ENCODE measurements at regions of chr4 and their contacts with region 1.

Region 1: GRCh38 chr4:177250056-177250696 is 59.5 kb upstream of the NEIL3 start:
- DNase-seq: peak in 1 of 2 donors; percentile 82
- H3K4me3 ChIP-seq: no peak overlapping the region
- H3K27ac ChIP-seq: no peak overlapping the region
- H3K4me1 ChIP-seq: peaks cover 0 to 4% of the 10 kb centered on the region in 2 donors
- H3K27me3 ChIP-seq: no peaks in the 10 kb centered on the region
- CTCF ChIP-seq: peak; percentile 77 to 96 (median 92)

Region 2: DNA sequence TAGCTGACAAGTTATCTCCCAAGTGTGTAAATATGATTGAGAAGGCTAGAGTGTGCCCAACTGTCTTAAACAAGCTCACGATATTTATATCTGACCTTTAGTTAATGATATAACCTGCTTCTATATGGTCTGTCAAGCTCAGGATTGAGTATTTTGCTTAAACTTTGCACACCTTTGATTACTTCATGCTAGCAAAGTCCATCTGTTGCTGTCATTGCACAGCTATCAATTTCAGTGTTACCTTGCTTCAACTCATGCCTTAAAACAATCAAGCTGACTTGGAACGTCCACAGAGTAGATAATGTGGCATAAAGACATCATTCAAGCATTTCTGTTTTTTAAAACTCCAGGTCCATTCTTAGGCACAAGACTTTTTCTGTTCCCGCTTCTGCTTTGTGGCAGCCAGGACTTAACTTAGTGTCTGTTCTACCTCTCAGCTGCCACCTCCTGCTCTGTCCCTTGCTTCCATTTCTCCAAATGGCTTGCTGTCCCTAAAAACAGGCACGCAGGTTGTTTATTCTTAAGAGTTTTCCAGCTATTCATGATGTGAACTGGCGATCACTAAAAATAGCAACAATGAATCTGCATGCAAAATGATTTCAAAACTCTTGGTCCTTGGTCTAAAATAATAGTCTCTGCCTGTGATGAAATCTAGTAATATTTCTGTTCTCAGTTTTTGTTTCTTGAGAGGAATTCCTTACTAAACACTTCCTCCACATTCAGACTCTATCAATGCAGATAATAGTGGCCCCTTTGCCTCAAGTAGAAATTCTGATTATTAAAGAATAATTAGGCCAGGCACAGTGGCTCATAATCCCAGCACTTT is 43.2 kb after region 1 on chr4:
- intact Hi-C with region 1: loop called (anchors 5 kb)
- DNase-seq: no peak
- H3K4me3 ChIP-seq: no peak overlapping the region
- H3K27ac ChIP-seq: peak overlapping the region; percentile 37 to 45
- H3K4me1 ChIP-seq: peaks cover 0 to 12% of the 10 kb centered on the region in 2 donors
- H3K27me3 ChIP-seq: no peaks in the 10 kb centered on the region
- CTCF ChIP-seq: no peak

Region 3: GRCh38 chr4:177339477-177340374 is 89.5 kb after region 1 on chr4:
- intact Hi-C with region 1: loop called (anchors 1 kb)
- DNase-seq: no peak
- H3K4me3 ChIP-seq: no peak overlapping the region
- H3K27ac ChIP-seq: no peak overlapping the region
- H3K4me1 ChIP-seq: no peaks in the 10 kb centered on the region
- H3K27me3 ChIP-seq: no peaks in the 10 kb centered on the region
- CTCF ChIP-seq: peak; percentile 37 to 73 (median 69)

Measured in ascending aorta (tissue), 2 donors.